ENCODE measurements at regions of chr1 and their contacts with region 1.

Region 1: DNA sequence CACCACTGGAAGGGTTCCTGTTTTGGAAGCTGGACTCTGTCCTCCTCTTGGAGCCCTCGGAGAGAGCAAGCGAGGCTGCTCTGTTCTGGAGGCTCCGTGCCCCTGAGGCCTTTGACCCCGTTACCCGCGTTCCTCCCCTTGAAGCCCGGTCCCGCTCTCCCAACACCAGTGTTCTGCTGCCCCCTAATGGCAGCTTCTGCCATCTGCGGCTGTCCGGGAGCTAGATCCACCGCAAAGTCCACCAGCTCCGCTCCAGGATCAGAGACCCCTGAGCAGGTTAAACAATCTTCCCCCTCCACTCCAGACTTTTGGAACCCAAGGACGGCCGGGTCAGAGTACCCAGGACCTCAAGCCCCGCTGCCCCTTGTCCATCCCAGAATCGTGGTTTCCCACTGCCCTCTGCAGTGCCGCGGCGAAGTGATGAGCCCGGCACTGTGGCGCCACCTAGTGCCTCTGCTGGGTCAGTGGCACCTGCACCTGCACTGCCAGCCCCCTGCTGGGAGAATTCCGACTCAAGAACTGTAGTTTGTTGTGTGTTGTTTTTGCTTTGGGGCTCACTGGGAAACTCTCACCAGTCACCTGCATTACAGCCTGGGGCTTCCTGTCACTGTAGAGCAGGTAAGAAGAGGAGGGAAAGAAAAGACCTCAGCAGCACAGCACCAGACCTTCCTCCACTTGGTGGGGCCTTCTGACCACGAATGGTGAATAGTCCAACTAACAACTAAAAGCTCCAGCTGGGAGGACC is 63.5 kb upstream of the NFASC start:
- DNase-seq: peak; percentile 75
- H3K4me3 Mint-ChIP-seq: peak overlapping the region; percentile 82
- H3K27ac Mint-ChIP-seq: peak overlapping the region; percentile 71
- H3K4me1 Mint-ChIP-seq: peaks cover 5% of the 10 kb centered on the region
- H3K27me3 Mint-ChIP-seq: peaks cover 11% of the 10 kb centered on the region

Region 2: DNA sequence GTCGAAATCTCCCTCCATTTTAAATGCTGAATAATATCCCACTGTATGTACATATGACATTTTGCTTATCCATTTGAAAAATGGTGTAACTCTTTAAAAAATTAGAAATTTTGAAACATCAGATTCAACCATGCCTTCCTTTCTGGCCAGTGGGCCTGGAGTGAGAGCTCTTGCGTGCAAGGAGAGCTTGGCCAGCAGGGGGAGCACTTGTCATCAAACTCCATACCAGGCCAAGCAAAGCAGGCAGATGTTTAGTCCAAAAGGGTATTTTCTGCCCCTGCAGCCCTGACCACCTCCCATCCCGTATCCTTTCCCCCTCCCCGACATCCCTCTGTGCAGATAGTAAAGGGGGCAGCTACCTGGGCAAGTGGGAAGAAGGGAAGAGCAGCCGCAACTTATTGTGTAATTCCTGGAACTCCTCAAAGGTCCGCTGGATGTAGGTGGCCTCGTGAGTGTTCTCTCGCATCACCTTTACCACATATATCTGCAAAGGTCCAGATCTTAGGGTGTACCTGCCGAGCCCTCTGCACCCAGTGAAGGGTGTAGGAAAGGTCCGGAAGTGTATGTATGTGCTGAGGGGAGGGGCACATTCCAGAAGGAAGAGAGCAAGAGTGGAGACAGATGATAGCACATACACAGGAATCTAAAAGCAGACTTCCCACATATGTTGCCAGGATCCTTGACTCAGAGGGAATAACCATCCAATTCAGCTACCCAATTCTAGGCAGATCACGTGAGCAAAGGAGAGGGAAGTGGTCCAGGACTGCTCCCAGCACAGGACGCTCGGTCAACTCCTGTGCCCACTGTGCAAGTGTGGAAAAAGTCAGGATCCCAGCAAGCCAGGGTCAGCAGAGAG is 375.6 kb before region 1 on chr1:
- intact Hi-C with region 1: loop called (anchors 1 kb)
- DNase-seq: peak; percentile 58
- H3K4me3 Mint-ChIP-seq: no peak overlapping the region
- H3K27ac Mint-ChIP-seq: no peak overlapping the region
- H3K4me1 Mint-ChIP-seq: no peaks in the 10 kb centered on the region
- H3K27me3 Mint-ChIP-seq: no peaks in the 10 kb centered on the region

Region 3: GRCh38 chr1:204480515-204480914 is 326.6 kb before region 1 on chr1:
- intact Hi-C with region 1: no loop called
- DNase-seq: no peak
- H3K4me3 Mint-ChIP-seq: no peak overlapping the region
- H3K27ac Mint-ChIP-seq: no peak overlapping the region
- H3K4me1 Mint-ChIP-seq: peaks cover 69% of the 10 kb centered on the region
- H3K27me3 Mint-ChIP-seq: no peaks in the 10 kb centered on the region

Region 4: DNA sequence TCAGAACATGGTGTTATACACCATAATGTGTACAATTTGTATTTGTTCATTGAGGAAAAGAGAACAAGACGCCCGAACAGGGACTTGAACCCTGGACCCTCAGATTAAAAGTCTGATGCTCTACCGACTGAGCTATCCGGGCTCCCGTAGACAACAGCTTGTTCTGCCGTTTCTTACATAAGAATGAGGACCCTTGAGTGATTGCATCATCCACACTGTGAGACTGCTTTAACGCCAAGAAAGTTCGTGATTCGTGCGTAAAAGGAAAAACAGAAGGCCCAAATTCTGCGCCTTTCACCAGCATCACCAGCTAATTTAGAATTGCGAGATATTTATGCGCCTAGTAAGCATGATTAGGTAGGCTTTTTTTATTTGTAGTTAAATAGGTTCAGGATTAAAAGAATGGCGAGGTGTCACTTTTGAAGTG is 300.1 kb before region 1 on chr1:
- intact Hi-C with region 1: loop called (anchors 1 kb)
- DNase-seq: peak; percentile 87
- H3K4me3 Mint-ChIP-seq: peak overlapping the region; percentile 94
- H3K27ac Mint-ChIP-seq: peak overlapping the region; percentile 98
- H3K4me1 Mint-ChIP-seq: peaks cover 48% of the 10 kb centered on the region
- H3K27me3 Mint-ChIP-seq: peaks cover 6% of the 10 kb centered on the region

Region 5: DNA sequence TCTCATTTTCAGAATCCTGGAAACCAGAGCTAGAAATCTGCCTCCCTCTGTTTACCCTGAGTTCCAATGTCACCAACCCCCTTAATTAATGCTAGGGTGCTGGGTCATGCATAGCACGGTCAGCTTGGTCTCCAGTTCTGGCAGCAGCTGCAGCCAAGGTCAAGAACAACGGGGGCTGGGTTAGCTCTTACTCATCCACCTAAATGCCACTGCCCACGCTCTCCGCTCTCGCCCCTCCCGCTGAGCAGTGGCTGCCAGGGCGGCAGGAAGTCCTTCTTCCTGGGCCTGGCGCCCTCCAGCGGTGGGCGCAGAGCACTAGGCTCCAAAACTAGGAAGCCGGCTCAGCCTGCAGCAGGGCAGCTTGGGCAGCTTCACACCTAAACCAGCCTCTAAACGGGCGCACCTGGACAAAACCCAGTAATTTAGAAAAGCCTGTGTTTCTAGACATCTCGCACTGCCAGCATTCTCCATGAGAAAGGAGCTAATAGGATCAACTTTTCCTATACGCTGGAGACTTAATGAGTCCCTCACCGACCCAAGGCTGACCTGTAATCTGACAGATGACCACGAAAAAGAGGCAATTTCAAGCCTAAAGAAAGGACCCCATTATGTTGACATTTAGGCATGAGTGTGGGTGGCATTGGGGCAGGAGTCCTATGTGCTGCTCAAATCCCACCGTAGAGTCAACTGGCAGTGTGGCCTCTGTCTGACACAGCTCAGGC is 43.2 kb before region 1 on chr1:
- intact Hi-C with region 1: loop called (anchors 1 kb)
- DNase-seq: peak; percentile 64
- H3K4me3 Mint-ChIP-seq: peak overlapping the region; percentile 20
- H3K27ac Mint-ChIP-seq: no peak overlapping the region
- H3K4me1 Mint-ChIP-seq: peaks cover 11% of the 10 kb centered on the region
- H3K27me3 Mint-ChIP-seq: peaks cover 40% of the 10 kb centered on the region

Region 6: GRCh38 chr1:205493241-205494085 is 686.3 kb after region 1 on chr1:
- intact Hi-C with region 1: no loop called
- DNase-seq: no peak
- H3K4me3 Mint-ChIP-seq: no peak overlapping the region
- H3K27ac Mint-ChIP-seq: no peak overlapping the region
- H3K4me1 Mint-ChIP-seq: peaks cover 4% of the 10 kb centered on the region
- H3K27me3 Mint-ChIP-seq: peaks cover 19% of the 10 kb centered on the region